Psoas muscle (tissue), 8 donors: ENCODE measurements at regions of chr7 and their contacts with region 1.

Region 1: GRCh38 chr7:9516662-9517061 is 1083.3 kb downstream of the NXPH1 start:
- DNase-seq: no peak
- ATAC-seq: no peak
- H3K4me3 ChIP-seq: no peak overlapping the region
- H3K27ac ChIP-seq: no peak overlapping the region
- H3K4me1 ChIP-seq: no peaks in the 10 kb centered on the region
- H3K27me3 ChIP-seq: no peaks in the 10 kb centered on the region
- CTCF ChIP-seq: no peak

Region 2: DNA sequence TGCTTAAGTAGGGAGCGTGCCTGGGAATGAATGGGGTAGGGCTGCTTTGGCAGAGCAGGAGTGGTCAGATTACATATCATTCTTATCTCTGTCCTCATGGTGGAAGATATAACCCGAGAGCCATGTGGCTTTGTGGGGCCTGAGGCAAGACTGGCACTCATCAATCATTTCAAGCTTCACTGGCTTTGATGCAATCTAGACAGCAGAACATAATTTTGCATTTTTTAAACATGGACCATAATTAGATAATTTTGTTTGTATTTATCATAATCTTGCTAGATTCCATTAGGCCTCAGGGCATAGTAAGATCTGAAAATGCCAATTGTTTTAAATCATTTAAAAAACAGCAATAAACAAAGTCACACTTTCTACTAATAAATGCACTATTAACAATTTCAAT is 603.0 kb before region 1 on chr7:
- intact Hi-C with region 1: loop called in 1 of 2 experiments (anchors 5 kb)
- DNase-seq: no peak
- ATAC-seq: no peak
- H3K4me3 ChIP-seq: no peak overlapping the region
- H3K27ac ChIP-seq: no peak overlapping the region
- H3K4me1 ChIP-seq: no peaks in the 10 kb centered on the region
- H3K27me3 ChIP-seq: no peaks in the 10 kb centered on the region
- CTCF ChIP-seq: no peak

Region 3: GRCh38 chr7:9785211-9785610 is 268.5 kb after region 1 on chr7:
- intact Hi-C with region 1: no loop called
- DNase-seq: no peak
- ATAC-seq: no peak
- H3K4me3 ChIP-seq: no peak overlapping the region
- H3K27ac ChIP-seq: no peak overlapping the region
- H3K4me1 ChIP-seq: no peaks in the 10 kb centered on the region
- H3K27me3 ChIP-seq: no peaks in the 10 kb centered on the region
- CTCF ChIP-seq: no peak